ENCODE measurements at regions of chr5 and their contacts with region 1.

Region 1: GRCh38 chr5:149719678-149720077 is 10.4 kb upstream of the PPARGC1B start:
- DNase-seq: peak; percentile 90
- H3K4me3 ChIP-seq: no peak overlapping the region
- H3K27ac ChIP-seq: no peak overlapping the region
- H3K4me1 ChIP-seq: no peaks in the 10 kb centered on the region
- H3K27me3 ChIP-seq: no peaks in the 10 kb centered on the region
- CTCF ChIP-seq: no peak
- POLR2A ChIP-seq: no peak

Region 2: GRCh38 chr5:149679876-149680809 is 39.5 kb before region 1 on chr5:
- intact Hi-C with region 1: loop called (anchors 5 kb)
- DNase-seq: no peak
- H3K4me3 ChIP-seq: no peak overlapping the region
- H3K27ac ChIP-seq: no peak overlapping the region
- H3K4me1 ChIP-seq: no peaks in the 10 kb centered on the region
- H3K27me3 ChIP-seq: no peaks in the 10 kb centered on the region
- CTCF ChIP-seq: no peak
- POLR2A ChIP-seq: no peak